PC-9 (cell line): ENCODE measurements at regions of chr5 and their contacts with region 1.

Region 1: DNA sequence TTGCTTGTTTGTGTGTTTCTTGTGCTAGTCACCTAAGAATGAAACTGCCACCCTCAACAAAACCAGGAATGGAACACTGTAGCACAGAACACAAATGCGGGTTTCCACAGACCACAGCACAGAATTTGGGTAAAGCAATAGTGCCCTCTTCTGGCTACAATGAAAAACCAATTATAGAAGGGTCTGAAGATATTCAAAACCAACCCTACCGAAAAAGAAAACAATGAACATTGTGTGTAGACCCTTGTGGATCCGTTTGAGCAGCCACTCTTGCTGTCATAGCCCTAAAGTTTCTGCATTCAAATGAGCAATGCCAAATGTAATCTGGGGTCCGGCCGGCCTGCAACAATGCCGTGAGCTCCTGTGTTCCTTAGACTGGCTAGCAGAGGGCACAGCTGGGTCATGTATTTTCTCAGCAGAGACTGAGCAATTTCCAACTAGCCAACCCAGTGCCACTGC is 8.3 kb upstream of the ENC1 start:
- DNase-seq: peak in 1 of 2 experiments; percentile 57
- H3K4me3 ChIP-seq: no peak overlapping the region
- H3K27ac ChIP-seq: no peak overlapping the region
- H3K4me1 ChIP-seq: peaks cover 23% of the 10 kb centered on the region
- H3K27me3 ChIP-seq: no peaks in the 10 kb centered on the region
- CTCF ChIP-seq: peak; percentile 83

Region 2: GRCh38 chr5:73902327-73903051 is 746.4 kb before region 1 on chr5:
- CTCF ChIA-PET with region 1: interaction called, 6 read pairs
- POLR2A ChIA-PET with region 1: no interaction called
- intact Hi-C with region 1: loop called (anchors 1 kb)
- DNase-seq: no peak
- H3K4me3 ChIP-seq: no peak overlapping the region
- H3K27ac ChIP-seq: peak overlapping the region; percentile 89
- H3K4me1 ChIP-seq: peaks cover 44% of the 10 kb centered on the region
- H3K27me3 ChIP-seq: no peaks in the 10 kb centered on the region
- CTCF ChIP-seq: peak; percentile 92

Region 3: GRCh38 chr5:74543156-74543995 is 105.5 kb before region 1 on chr5:
- CTCF ChIA-PET with region 1: no interaction called
- POLR2A ChIA-PET with region 1: no interaction called
- intact Hi-C with region 1: no loop called
- DNase-seq: peak; percentile 86 to 97
- H3K4me3 ChIP-seq: peak overlapping the region; percentile 31; the same call in 1 of the 2 replicates
- H3K27ac ChIP-seq: peak overlapping the region; percentile 95
- H3K4me1 ChIP-seq: peaks cover 73% of the 10 kb centered on the region
- H3K27me3 ChIP-seq: no peaks in the 10 kb centered on the region
- CTCF ChIP-seq: no peak